ENCODE measurements at regions of chr11 and their contacts with region 1.

Region 1: DNA sequence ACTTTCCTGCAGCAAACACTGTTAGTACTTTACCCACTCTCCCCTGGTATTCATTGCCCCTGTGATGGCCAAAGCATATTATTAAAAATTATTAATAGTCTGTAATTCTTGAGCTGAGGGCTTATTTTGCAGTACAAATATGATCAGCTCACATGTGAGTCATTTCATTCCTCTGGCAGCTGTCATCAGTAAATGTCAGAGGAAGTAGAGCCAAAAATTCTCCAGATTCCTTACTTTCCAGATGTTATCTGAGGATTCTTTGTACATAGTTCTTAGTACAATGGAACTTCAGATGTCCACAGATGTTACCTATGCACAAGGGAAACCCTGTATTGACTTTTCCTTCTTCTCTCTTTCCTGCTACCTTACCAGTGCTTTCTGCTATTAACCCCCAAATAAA is 12.5 kb downstream of the OR5B3 start:
- DNase-seq: peak; percentile 79
- H3K4me3 ChIP-seq: no peak overlapping the region
- H3K27ac ChIP-seq: peak overlapping the region; percentile 78
- H3K4me1 ChIP-seq: peaks cover 18% of the 10 kb centered on the region
- H3K27me3 ChIP-seq: no peaks in the 10 kb centered on the region
- CTCF ChIP-seq: no peak
- POLR2A ChIP-seq: no peak

Region 2: GRCh38 chr11:58334708-58335107 is 59.5 kb before region 1 on chr11:
- CTCF ChIA-PET with region 1: interaction called, 3 read pairs
- POLR2A ChIA-PET with region 1: no interaction called
- dilution Hi-C with region 1: no loop called
- intact Hi-C with region 1: loop called (anchors 1 kb)
- DNase-seq: peak; percentile 87
- H3K4me3 ChIP-seq: peak overlapping the region in 1 of 3 experiments; percentile 27
- H3K27ac ChIP-seq: peak overlapping the region; percentile 87
- H3K4me1 ChIP-seq: peaks cover 16% of the 10 kb centered on the region
- H3K27me3 ChIP-seq: no peaks in the 10 kb centered on the region
- CTCF ChIP-seq: no peak
- POLR2A ChIP-seq: no peak